ENCODE measurements at regions of chr14 and their contacts with region 1.

Region 1: GRCh38 chr14:78933948-78934524 is 763.9 kb downstream of the NRXN3 start:
- DNase-seq: peak; percentile 54
- H3K4me3 ChIP-seq: no peak overlapping the region
- H3K27ac ChIP-seq: no peak overlapping the region
- H3K4me1 ChIP-seq: peaks cover 8% of the 10 kb centered on the region
- H3K27me3 ChIP-seq: no peaks in the 10 kb centered on the region
- CTCF ChIP-seq: peak; percentile 37 to 42
- POLR2A ChIP-seq: no peak

Region 2: GRCh38 chr14:78104148-78104547 is 829.9 kb before region 1 on chr14:
- CTCF ChIA-PET with region 1: no interaction called
- POLR2A ChIA-PET with region 1: no interaction called
- dilution Hi-C with region 1: no loop called
- intact Hi-C with region 1: no loop called
- DNase-seq: no peak
- H3K4me3 ChIP-seq: no peak overlapping the region
- H3K27ac ChIP-seq: no peak overlapping the region
- H3K4me1 ChIP-seq: no peaks in the 10 kb centered on the region
- H3K27me3 ChIP-seq: no peaks in the 10 kb centered on the region
- CTCF ChIP-seq: no peak
- POLR2A ChIP-seq: no peak

Region 3: DNA sequence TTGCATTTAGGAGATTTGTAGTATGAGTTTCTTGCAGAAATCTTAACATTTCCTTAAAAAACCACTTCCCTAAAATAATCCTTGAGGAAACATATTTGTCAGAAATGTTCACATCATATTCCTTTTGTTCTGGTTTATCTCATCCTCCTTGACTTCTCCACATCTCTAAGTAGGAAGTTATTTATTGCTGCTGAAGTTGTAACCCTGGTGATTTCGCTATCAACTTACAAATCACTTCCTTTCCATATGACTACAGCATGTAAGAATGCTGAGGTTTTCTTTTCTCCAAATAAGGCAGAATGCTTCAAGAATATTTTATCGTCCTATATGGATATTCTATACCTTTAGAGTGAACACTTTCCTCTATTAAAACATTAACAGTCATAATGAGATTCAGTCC is 12.2 kb before region 1 on chr14:
- CTCF ChIA-PET with region 1: interaction called, 59 read pairs
- POLR2A ChIA-PET with region 1: no interaction called
- dilution Hi-C with region 1: no loop called
- intact Hi-C with region 1: loop called (anchors 1 kb)
- DNase-seq: peak; percentile 92
- H3K4me3 ChIP-seq: peak overlapping the region in 1 of 3 experiments; percentile 19
- H3K27ac ChIP-seq: peak overlapping the region; percentile 82
- H3K4me1 ChIP-seq: peaks cover 33% of the 10 kb centered on the region
- H3K27me3 ChIP-seq: no peaks in the 10 kb centered on the region
- CTCF ChIP-seq: no peak
- POLR2A ChIP-seq: peak; percentile 61

Region 4: DNA sequence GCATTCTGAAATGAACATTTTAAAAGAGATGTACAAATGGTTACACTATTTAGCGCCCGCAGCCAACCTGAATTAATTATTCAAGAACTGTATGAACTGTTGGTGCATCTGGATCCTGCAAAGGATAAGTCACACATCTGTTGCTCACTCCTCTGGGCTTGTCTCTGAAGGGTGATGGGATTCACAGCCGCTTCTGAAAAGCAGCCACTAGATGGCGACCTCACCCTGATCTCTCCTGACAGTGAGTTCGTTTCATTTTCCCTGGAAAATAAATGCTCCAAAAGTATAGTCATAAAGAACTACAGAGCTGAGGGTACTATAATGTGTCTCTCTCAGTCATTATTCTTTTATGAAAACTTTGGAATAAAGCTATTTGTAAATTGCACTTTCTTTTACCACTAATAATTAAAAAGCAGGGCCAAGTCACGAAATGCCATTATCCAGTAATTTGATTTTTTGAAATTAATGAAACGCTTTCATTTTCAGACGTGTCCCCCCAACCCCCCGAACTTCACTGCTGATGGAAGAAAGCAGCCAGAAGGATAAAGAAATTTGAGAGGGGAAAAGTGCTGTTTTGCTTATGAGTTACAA is 25.7 kb after region 1 on chr14:
- CTCF ChIA-PET with region 1: interaction called, 30 read pairs
- POLR2A ChIA-PET with region 1: no interaction called
- dilution Hi-C with region 1: no loop called
- intact Hi-C with region 1: no loop called
- DNase-seq: peak; percentile 74
- H3K4me3 ChIP-seq: no peak overlapping the region
- H3K27ac ChIP-seq: no peak overlapping the region
- H3K4me1 ChIP-seq: peaks cover 12% of the 10 kb centered on the region
- H3K27me3 ChIP-seq: no peaks in the 10 kb centered on the region
- CTCF ChIP-seq: peak; percentile 84 to 87
- POLR2A ChIP-seq: no peak

Region 5: GRCh38 chr14:78974691-78975090 is 40.7 kb after region 1 on chr14:
- CTCF ChIA-PET with region 1: interaction called, 18 read pairs
- POLR2A ChIA-PET with region 1: no interaction called
- dilution Hi-C with region 1: no loop called
- intact Hi-C with region 1: no loop called
- DNase-seq: peak; percentile 88
- H3K4me3 ChIP-seq: no peak overlapping the region
- H3K27ac ChIP-seq: peak overlapping the region; percentile 84
- H3K4me1 ChIP-seq: peaks cover 25% of the 10 kb centered on the region
- H3K27me3 ChIP-seq: no peaks in the 10 kb centered on the region
- CTCF ChIP-seq: no peak
- POLR2A ChIP-seq: no peak

Region 6: GRCh38 chr14:79543971-79544697 is 610.1 kb after region 1 on chr14:
- CTCF ChIA-PET with region 1: interaction called, 36 read pairs
- POLR2A ChIA-PET with region 1: no interaction called
- dilution Hi-C with region 1: no loop called
- intact Hi-C with region 1: loop called (anchors 2 kb)
- DNase-seq: peak; percentile 10
- H3K4me3 ChIP-seq: no peak overlapping the region
- H3K27ac ChIP-seq: no peak overlapping the region
- H3K4me1 ChIP-seq: no peaks in the 10 kb centered on the region
- H3K27me3 ChIP-seq: no peaks in the 10 kb centered on the region
- CTCF ChIP-seq: peak; percentile 15 to 26
- POLR2A ChIP-seq: no peak

Region 7: DNA sequence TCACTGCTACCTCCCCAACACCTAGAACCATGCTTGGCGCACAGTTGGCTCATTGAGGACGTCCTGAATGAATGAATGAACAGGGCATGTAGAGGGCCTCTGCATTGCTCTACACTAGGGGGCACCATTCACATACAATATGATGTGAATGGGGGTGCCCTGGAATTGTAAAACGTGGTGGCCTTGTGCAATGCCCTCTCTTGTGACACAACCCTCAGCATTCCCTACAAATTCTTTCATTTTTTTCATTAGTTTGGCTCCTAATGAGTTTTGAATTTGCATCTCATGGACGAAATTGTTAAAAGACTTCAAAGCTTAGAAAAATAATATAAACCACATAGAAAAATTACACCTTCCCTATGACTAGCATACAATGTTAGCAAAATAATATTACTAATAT is 1279.6 kb after region 1 on chr14:
- CTCF ChIA-PET with region 1: interaction called, 23 read pairs
- POLR2A ChIA-PET with region 1: no interaction called
- dilution Hi-C with region 1: no loop called
- intact Hi-C with region 1: loop called (anchors 1 kb)
- DNase-seq: peak; percentile 39
- H3K4me3 ChIP-seq: no peak overlapping the region
- H3K27ac ChIP-seq: no peak overlapping the region
- H3K4me1 ChIP-seq: no peaks in the 10 kb centered on the region
- H3K27me3 ChIP-seq: peaks cover 0 to 2% of the 10 kb centered on the region in 2 experiments
- CTCF ChIP-seq: peak; percentile 43 to 55
- POLR2A ChIP-seq: no peak

Region 8: GRCh38 chr14:80862983-80863382 is 1928.9 kb after region 1 on chr14:
- CTCF ChIA-PET with region 1: interaction called, 80 read pairs
- POLR2A ChIA-PET with region 1: no interaction called
- dilution Hi-C with region 1: no loop called
- intact Hi-C with region 1: no loop called
- DNase-seq: peak; percentile 12
- H3K4me3 ChIP-seq: no peak overlapping the region
- H3K27ac ChIP-seq: no peak overlapping the region
- H3K4me1 ChIP-seq: no peaks in the 10 kb centered on the region
- H3K27me3 ChIP-seq: no peaks in the 10 kb centered on the region
- CTCF ChIP-seq: peak in 1 of 2 donors; percentile 5
- POLR2A ChIP-seq: no peak